PC-3 (cell line): ENCODE measurements at regions of chr10 and their contacts with region 1.

Region 1: GRCh38 chr10:33330543-33331378 is 3.7 kb downstream of the NRP1 start:
- DNase-seq: peak; percentile 100
- ATAC-seq: peak; percentile 21
- H3K4me3 ChIP-seq: peak overlapping the region; percentile 69
- H3K27ac ChIP-seq: peak overlapping the region; percentile 86
- H3K4me1 ChIP-seq: peaks cover 46% of the 10 kb centered on the region
- H3K27me3 ChIP-seq: no peaks in the 10 kb centered on the region
- CTCF ChIP-seq: peak; percentile 100

Region 2: GRCh38 chr10:33193057-33193700 is 137.6 kb before region 1 on chr10:
- CTCF ChIA-PET with region 1: interaction called, 12 read pairs
- POLR2A ChIA-PET with region 1: interaction called, 21 read pairs
- intact Hi-C with region 1: loop called (anchors 2 kb)
- DNase-seq: peak; percentile 100
- ATAC-seq: peak; percentile 74
- H3K4me3 ChIP-seq: no peak overlapping the region
- H3K27ac ChIP-seq: peak overlapping the region; percentile 72
- H3K4me1 ChIP-seq: peaks cover 54% of the 10 kb centered on the region
- H3K27me3 ChIP-seq: no peaks in the 10 kb centered on the region
- CTCF ChIP-seq: no peak

Region 3: DNA sequence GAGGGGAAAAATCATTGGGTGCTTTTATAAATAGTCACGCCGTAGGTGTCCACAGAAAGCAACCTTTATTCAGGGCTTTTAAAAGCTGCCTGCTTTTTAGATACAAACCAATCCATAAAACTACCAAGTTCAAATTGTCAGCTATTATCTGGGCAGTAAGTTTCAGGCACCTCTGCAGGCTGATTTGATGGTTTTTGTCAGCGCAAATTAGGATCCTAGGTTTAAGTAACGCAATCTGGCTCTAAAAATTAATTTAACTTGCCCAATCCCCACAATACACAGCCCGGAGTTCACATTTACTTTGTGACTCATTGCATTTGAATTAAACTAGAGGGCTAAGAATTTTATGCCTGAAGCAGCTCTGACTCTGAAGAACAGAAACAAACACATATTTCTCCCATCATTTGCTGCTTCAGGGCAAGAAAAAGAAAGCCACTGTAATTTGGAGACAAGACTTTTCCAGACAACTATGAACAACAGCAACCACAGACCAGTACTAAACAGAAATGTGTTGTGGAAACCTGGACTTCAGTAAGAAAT is 39.6 kb before region 1 on chr10:
- CTCF ChIA-PET with region 1: no interaction called
- POLR2A ChIA-PET with region 1: interaction called, 5 read pairs
- intact Hi-C with region 1: loop called (anchors 2 kb)
- DNase-seq: peak; percentile 100
- ATAC-seq: peak; percentile 78
- H3K4me3 ChIP-seq: peak overlapping the region; percentile 16
- H3K27ac ChIP-seq: peak overlapping the region; percentile 60
- H3K4me1 ChIP-seq: peaks cover 78% of the 10 kb centered on the region
- H3K27me3 ChIP-seq: no peaks in the 10 kb centered on the region
- CTCF ChIP-seq: no peak

Region 4: DNA sequence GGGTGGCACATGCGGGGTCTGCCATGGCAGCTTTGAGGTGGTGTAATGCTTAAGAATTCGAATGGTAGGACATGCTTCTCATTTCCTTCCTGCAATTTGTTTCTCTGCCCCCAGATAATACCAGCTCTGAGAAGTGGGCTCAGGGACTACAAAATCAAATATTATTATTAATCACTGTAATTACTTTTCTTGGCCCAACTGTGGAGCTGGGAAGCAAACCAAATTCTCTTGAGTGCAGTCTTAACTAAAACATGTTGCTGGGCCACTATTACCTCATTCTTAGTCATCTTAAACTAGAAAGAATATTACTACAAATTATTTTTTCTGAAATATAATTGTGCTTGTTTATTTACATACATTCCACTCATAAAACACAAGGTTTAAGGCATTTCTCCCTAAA is 570.4 kb after region 1 on chr10:
- CTCF ChIA-PET with region 1: no interaction called
- POLR2A ChIA-PET with region 1: interaction called, 4 read pairs
- intact Hi-C with region 1: loop called (anchors 5 kb)
- DNase-seq: peak; percentile 98
- ATAC-seq: peak; percentile 83
- H3K4me3 ChIP-seq: no peak overlapping the region
- H3K27ac ChIP-seq: peak overlapping the region; percentile 68
- H3K4me1 ChIP-seq: peaks cover 29% of the 10 kb centered on the region
- H3K27me3 ChIP-seq: no peaks in the 10 kb centered on the region
- CTCF ChIP-seq: peak; percentile 40; the same call in 1 of the 2 replicates

Region 5: GRCh38 chr10:34121781-34122628 is 791.2 kb after region 1 on chr10:
- CTCF ChIA-PET with region 1: no interaction called
- POLR2A ChIA-PET with region 1: interaction called, 7 read pairs
- intact Hi-C with region 1: loop called (anchors 1 kb)
- DNase-seq: peak; percentile 87
- ATAC-seq: peak; percentile 33
- H3K4me3 ChIP-seq: peak overlapping the region; percentile 2; the same call in 1 of the 2 replicates
- H3K27ac ChIP-seq: peak overlapping the region; percentile 49
- H3K4me1 ChIP-seq: peaks cover 33% of the 10 kb centered on the region
- H3K27me3 ChIP-seq: no peaks in the 10 kb centered on the region
- CTCF ChIP-seq: no peak

Region 6: DNA sequence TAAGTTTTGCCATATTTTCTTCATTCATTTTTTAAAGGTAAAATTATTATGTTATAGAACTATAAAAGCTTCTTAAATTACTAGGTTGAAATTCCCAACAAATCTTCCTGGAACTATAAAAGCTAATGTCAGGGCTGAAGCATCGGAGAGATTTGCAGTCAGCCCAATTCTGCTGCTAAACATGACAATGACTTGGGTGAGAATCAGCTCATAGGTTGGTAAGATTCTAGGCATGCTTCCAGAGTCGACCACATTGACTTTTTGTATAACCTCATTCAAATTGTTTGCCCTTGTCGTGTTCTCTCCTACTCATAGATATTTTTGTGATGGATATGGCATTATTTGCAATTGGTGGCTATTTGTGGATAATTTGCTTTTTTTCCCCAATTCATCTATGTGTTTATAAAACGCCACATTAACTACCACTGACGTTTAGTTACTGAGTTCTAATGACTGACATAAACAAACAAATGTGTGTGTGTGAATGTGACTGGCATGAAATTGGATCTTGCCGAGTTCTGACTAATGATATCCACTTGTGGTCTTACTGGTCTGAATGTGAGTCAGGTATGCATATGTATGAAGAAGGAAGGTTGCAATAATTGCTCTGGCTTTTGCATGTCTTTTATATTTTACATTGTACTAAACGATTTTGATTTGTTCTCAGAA is 904.5 kb after region 1 on chr10:
- CTCF ChIA-PET with region 1: no interaction called
- POLR2A ChIA-PET with region 1: interaction called, 3 read pairs
- intact Hi-C with region 1: loop called (anchors 1 kb)
- DNase-seq: peak; percentile 100
- ATAC-seq: peak; percentile 100
- H3K4me3 ChIP-seq: peak overlapping the region; percentile 42
- H3K27ac ChIP-seq: peak overlapping the region; percentile 47
- H3K4me1 ChIP-seq: peaks cover 18% of the 10 kb centered on the region
- H3K27me3 ChIP-seq: no peaks in the 10 kb centered on the region
- CTCF ChIP-seq: no peak

Region 7: DNA sequence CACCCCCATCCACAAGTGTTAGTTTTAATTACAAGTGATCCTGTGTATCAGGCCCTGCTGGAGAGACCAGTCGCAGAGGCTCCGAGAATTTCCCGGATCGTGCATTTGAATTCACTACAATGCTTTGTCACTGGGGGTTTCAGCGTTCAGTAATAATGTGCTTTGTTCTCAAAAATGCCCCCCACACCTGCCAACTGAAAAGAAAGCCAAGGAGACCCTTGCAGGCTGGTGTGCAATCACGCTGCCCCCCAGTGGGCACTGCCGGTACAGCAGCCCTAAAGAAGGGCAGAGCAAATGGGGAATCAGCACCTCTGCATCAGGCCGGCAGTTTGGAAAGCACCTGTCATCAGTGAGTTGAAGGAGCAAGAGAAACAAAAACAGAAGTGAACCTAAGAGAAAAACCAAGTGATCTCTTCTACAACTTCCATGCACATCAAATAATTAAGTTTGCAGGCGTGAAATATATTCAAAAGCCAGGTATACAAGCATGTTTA is 1306.7 kb after region 1 on chr10:
- CTCF ChIA-PET with region 1: interaction called, 19 read pairs
- POLR2A ChIA-PET with region 1: no interaction called
- intact Hi-C with region 1: loop called (anchors 1 kb)
- DNase-seq: peak; percentile 91
- ATAC-seq: peak; percentile 48
- H3K4me3 ChIP-seq: no peak overlapping the region
- H3K27ac ChIP-seq: no peak overlapping the region
- H3K4me1 ChIP-seq: peaks cover 18% of the 10 kb centered on the region
- H3K27me3 ChIP-seq: no peaks in the 10 kb centered on the region
- CTCF ChIP-seq: peak; percentile 100